ENCODE measurements at regions of chr1 and their contacts with region 1.

Region 1: GRCh38 chr1:51192213-51192843 is 43.7 kb upstream of the RNF11 start:
- DNase-seq: peak; percentile 63
- H3K27ac ChIP-seq: no peak overlapping the region
- CTCF ChIP-seq: peak; percentile 84

Region 2: DNA sequence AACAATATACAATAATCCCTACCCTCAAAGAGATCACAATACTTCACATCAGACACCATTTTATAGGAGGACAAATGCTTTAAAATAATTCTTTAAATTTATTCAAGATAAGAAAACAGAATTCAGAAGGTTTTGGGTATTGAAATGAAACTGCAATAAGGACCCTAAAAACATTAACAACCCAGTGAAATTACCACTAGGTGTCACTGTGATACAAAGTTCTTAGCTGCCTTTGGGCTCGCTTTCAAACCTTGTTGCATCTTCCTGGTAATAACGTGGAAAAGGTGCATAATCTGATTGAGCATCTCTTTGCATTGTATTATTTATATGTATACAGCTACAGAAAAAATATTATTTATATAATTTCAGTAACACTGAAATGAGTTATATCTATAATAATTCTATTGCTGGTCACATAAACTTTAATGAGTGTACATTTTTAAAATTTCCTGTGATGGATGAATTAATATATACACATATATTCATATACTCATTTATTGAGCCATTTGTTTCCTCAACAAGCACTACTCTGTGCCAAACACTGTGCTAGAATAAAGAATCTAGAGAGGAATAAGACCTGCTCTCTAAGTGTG is 417.5 kb before region 1 on chr1:
- CTCF ChIA-PET with region 1: interaction called, 19 read pairs
- POLR2A ChIA-PET with region 1: interaction called, 3 read pairs
- DNase-seq: peak; percentile 39
- H3K27ac ChIP-seq: no peak overlapping the region
- CTCF ChIP-seq: peak; percentile 75

Region 3: GRCh38 chr1:50858761-50859160 is 333.6 kb before region 1 on chr1:
- CTCF ChIA-PET with region 1: interaction called, 10 read pairs
- POLR2A ChIA-PET with region 1: no interaction called
- DNase-seq: no peak
- H3K27ac ChIP-seq: no peak overlapping the region
- CTCF ChIP-seq: no peak

Region 4: DNA sequence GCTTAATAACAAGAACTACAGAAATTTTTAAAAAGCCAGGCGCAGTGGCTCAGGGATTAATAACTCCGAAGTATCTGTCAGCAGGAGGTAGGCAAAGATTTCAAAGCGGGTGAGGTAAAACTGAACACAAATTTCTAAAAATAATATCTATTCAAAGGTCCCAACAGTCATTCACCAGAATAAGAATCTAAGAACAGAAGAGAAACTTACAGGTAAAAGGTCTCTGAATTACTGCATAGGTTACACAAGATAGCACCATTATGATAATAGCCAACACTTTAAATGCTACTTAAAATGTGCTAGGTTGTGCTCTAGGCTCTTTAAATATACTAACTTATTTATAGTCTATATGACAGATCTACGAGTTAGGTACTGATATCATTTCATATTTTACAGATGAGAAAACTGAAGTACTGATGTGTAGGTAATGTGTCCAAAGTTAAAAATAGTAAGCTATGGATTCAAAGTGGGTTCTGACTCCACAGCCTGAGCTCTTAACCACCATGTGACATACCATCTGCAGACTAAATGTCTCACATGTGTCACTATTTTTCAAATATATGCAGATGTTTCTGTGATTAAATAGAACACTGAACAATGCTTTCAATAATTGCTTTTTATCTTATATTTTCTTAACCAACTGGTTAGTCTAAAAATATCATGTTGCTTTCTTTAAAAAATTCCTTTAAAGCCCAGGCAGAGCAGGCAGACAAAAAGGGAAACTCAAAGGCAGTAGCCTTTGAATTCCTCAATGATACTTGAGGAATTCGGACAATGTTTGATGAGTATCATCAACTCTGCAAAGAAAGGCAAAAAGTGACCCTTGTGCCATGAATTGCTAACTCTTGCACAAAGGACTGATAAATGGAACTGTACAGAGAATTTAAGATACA is 218.5 kb after region 1 on chr1:
- CTCF ChIA-PET with region 1: no interaction called
- POLR2A ChIA-PET with region 1: no interaction called
- DNase-seq: no peak
- H3K27ac ChIP-seq: no peak overlapping the region
- CTCF ChIP-seq: no peak

Measured in RWPE1 (cell line).